ENCODE measurements at regions of chr1 and their contacts with region 1.

Region 1: DNA sequence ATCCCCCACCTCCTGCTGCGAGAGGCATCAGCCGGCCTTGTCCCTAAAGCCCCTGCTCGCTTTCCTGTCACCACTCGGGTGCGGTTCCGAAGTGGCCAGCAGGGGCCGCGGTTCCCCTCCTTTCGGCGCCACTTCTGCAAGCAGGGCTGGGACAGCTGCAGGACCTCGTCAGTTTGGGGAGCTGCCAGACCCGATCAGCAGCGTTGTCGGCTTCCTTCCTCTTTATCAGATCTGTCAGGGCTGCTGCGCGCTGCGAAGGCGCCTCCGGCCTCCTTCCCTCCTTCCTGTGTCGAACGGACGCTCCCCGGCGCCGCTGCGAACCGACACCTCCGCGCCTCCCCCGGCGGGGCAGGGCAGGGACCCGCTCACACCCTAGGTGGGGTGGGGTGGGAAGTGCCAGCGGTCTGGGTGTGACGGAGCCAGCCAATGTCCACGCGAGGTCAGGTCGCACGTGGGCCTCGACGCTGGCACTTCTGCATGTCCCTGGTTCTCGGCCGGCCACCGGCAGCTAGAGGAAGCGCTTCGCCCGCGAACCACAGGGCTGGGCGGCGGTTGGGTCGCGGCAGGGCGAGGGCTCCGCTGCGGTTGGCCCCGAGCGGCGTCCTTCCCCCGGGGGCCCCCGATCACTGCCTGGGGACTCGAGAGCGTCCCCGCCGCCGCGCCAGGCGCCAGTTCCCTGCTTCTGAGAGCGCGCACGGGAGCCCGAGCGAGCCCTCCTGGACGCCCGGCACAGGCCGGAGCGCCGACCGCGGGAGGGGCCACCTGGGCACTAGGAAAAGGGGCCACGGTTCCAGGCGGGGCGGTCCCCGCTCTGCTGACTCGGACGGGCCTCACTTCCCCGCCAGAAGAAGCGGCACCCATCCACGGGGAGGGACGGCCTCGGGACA is 81.8 kb downstream of the RUNX3 start:
- DNase-seq: peak; percentile 58 to 80
- ATAC-seq: peak; percentile 92 to 95
- H3K4me3 ChIP-seq: peak overlapping the region; percentile 55
- H3K27ac ChIP-seq: peak overlapping the region; percentile 47 to 84; a peak in 5 of 6 replicates
- H3K4me1 ChIP-seq: peaks cover 5% of the 10 kb centered on the region; the same call in 1 of the 3 replicates
- CTCF ChIP-seq: peak; percentile 72
- EP300 ChIP-seq: no peak
- POLR2A ChIP-seq: no peak
- RAD21 ChIP-seq: peak; percentile 78 to 79

Region 2: DNA sequence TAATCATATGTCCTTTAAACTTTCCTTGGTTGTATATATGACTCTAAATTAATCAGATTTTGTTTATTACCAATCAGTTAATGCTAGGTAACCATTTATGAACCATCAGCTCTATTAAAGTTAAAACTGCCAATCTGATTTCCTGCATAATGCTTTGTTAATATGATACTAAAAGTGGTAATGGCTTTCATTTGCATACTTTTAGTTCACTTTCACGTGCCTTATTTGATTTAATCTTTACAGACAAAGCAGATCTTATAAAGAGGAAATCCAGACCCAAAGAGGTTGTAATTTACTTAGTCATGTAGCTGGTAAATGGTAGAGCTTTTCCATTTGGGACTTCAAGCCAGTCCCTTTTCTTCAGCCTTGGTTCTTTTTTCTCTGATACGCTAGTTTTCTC is 41.6 kb before region 1 on chr1:
- CTCF ChIA-PET with region 1: no interaction called
- POLR2A ChIA-PET with region 1: no interaction called
- DNase-seq: no peak
- ATAC-seq: no peak
- H3K4me3 ChIP-seq: no peak overlapping the region
- H3K27ac ChIP-seq: no peak overlapping the region
- H3K4me1 ChIP-seq: peaks cover 8% of the 10 kb centered on the region
- CTCF ChIP-seq: no peak
- EP300 ChIP-seq: no peak
- POLR2A ChIP-seq: no peak
- RAD21 ChIP-seq: no peak

Region 3: GRCh38 chr1:24830680-24831272 is 17.5 kb before region 1 on chr1:
- CTCF ChIA-PET with region 1: interaction called, 15 read pairs
- POLR2A ChIA-PET with region 1: no interaction called
- DNase-seq: peak; percentile 34 to 68
- ATAC-seq: peak; percentile 74 to 83
- H3K4me3 ChIP-seq: no peak overlapping the region
- H3K27ac ChIP-seq: no peak overlapping the region
- H3K4me1 ChIP-seq: peaks cover 28% of the 10 kb centered on the region
- CTCF ChIP-seq: peak; percentile 89
- EP300 ChIP-seq: no peak
- POLR2A ChIP-seq: no peak
- RAD21 ChIP-seq: peak; percentile 85 to 88

Region 4: DNA sequence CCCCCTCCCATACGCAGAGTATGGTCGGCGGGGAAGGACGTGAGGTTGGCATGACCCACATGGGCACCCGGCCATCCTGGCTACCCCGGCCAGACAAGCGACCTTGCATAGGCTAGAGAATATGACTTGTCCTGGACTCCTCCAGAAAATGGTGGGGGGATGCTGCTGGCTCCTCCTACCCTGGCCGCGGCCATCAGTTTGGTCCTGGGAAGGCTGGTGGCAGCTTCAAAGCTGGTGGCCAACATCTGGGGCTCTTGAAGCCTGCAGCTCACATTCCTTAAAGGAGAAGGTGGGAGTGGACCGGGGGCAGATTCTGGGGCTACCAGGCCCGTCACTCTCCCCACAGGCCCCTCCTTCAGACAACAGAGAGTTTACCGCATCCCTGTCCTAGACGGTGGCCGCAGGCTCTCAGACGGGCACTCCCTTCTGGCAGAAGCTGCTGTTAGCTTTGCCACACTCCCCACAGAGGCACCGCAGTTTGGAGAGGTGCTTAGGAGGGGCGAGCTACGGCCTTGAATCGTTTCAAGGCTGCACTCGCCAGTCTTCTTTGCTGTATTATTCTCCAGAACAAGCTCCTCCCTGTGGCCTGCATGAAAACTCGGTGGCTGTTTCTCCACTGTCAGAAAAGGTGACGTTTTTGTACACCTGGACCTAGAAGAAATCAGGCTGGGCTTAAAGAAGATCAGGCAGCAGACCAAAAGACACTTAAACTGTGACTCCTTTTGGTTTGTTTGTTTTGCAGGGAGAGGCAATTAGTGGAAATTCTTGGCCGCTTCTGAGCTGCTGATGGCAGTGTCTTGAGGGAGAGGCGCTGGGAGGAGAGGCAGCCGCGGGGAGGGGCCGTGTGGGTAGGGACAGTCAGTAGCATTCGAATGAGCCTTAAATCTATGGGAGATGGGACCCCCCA is 13.8 kb after region 1 on chr1:
- CTCF ChIA-PET with region 1: interaction called, 47 read pairs
- POLR2A ChIA-PET with region 1: no interaction called
- DNase-seq: peak in 1 of 2 experiments; percentile 28
- ATAC-seq: peak; percentile 66 to 76; a peak in 5 of 6 replicates
- H3K4me3 ChIP-seq: no peak overlapping the region
- H3K27ac ChIP-seq: peak overlapping the region in 1 of 2 experiments; percentile 64; a peak in 3 of 6 replicates
- H3K4me1 ChIP-seq: peaks cover 11% of the 10 kb centered on the region; the same call in 2 of the 3 replicates
- CTCF ChIP-seq: no peak
- EP300 ChIP-seq: no peak
- POLR2A ChIP-seq: no peak
- RAD21 ChIP-seq: no peak; a peak in 1 of 5 replicates

Region 5: DNA sequence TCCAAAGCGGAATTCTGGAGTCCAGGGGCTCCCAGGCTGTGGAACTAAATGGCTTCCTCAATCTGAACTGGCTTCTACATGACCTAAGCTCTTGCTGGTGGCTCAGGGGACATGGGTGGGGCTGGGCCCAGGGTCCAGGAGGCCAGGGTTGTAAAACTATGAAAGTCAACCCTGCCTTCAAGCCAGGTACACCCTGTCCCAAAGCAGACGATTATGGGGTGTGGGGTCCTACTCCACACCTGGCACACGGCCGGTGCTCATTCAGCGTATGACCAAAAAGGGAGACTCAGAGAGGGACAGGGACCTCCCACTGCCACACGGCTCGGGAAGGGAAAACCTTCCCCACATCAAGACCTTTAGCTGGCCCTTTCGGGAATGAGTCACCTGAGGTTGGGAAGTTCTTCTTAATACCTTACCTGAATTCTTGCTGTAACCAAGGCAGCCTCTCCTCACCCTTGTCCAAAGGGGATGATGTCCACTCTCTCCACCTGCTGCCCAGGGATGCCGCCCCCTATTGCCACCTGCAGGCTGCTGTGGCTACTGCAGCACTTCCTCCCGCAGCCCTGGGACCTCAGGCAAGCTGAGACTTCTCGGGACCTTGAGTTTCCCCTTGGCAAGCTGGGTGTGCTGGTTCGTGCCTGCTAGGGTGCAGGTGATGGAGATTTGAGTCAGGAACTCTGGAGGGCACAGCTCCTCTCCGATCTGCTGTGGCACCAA is 49.7 kb after region 1 on chr1:
- CTCF ChIA-PET with region 1: interaction called, 34 read pairs
- POLR2A ChIA-PET with region 1: no interaction called
- DNase-seq: peak; percentile 39 to 69
- ATAC-seq: peak; percentile 84 to 93; a peak in 5 of 6 replicates
- H3K4me3 ChIP-seq: no peak overlapping the region
- H3K27ac ChIP-seq: no peak overlapping the region
- H3K4me1 ChIP-seq: no peaks in the 10 kb centered on the region
- CTCF ChIP-seq: peak; percentile 50
- EP300 ChIP-seq: no peak
- POLR2A ChIP-seq: no peak
- RAD21 ChIP-seq: peak in 1 of 2 experiments; percentile 51; a peak in 4 of 5 replicates

Region 6: GRCh38 chr1:25099343-25099951 is 251.2 kb after region 1 on chr1:
- CTCF ChIA-PET with region 1: interaction called, 35 read pairs
- POLR2A ChIA-PET with region 1: no interaction called
- DNase-seq: no peak
- ATAC-seq: peak in 1 of 2 experiments; percentile 17; a peak in 2 of 6 replicates
- H3K4me3 ChIP-seq: no peak overlapping the region
- H3K27ac ChIP-seq: no peak overlapping the region
- H3K4me1 ChIP-seq: no peaks in the 10 kb centered on the region
- CTCF ChIP-seq: no peak
- EP300 ChIP-seq: no peak
- POLR2A ChIP-seq: no peak
- RAD21 ChIP-seq: no peak

Region 7: DNA sequence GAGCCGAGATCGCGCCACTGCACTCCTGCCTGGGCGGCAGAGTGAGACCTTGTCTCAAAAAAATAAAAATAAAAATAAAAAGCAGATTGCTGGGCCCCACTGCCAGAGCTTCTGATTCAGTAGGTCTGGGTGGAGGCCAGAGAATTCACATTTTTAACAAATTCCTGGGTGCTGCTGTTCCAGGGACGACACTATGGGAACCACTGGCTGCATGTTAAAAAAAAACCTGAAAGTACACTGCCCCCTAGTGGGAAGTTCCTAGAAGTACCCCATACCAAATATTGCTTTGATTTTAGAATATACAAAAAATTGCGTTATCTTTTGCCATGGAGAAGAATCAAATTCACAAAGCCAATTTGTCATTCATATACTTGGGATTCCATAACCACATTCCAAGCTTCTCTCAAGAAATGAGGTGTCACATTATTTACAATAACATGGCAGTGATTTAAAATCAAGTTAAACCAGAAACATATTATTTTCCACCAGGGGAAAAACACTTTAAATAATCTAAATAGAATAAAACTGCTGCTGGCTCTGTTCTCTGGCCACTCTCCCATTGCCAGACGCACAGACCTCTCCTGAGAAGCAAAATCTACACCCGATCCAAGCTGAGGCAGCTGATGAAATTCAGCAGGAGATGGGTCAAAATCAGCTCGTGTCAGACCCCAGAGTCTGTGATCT is 356.7 kb after region 1 on chr1:
- CTCF ChIA-PET with region 1: interaction called, 40 read pairs
- POLR2A ChIA-PET with region 1: no interaction called
- DNase-seq: peak; percentile 32 to 42
- ATAC-seq: peak; percentile 70; a peak in 4 of 6 replicates
- H3K4me3 ChIP-seq: no peak overlapping the region
- H3K27ac ChIP-seq: no peak overlapping the region
- H3K4me1 ChIP-seq: no peaks in the 10 kb centered on the region
- CTCF ChIP-seq: peak; percentile 69
- EP300 ChIP-seq: no peak
- POLR2A ChIP-seq: no peak
- RAD21 ChIP-seq: peak; percentile 64 to 68

Measured in A549 (cell line).